ENCODE measurements at regions of chr9 and their contacts with region 1.

Region 1: GRCh38 chr9:106119176-106119575 is 424.8 kb downstream of the TMEM38B start:
- DNase-seq: no peak
- ATAC-seq: no peak
- H3K4me3 ChIP-seq: no peak overlapping the region
- H3K27ac ChIP-seq: no peak overlapping the region
- H3K4me1 ChIP-seq: no peaks in the 10 kb centered on the region
- H3K27me3 ChIP-seq: no peaks in the 10 kb centered on the region
- CTCF ChIP-seq: no peak

Region 2: GRCh38 chr9:106156465-106156864 is 37.3 kb after region 1 on chr9:
- CTCF ChIA-PET with region 1: no interaction called
- POLR2A ChIA-PET with region 1: no interaction called
- in situ Hi-C with region 1: no loop called
- intact Hi-C with region 1: no loop called
- DNase-seq: no peak
- ATAC-seq: no peak
- H3K4me3 ChIP-seq: no peak overlapping the region
- H3K27ac ChIP-seq: no peak overlapping the region
- H3K4me1 ChIP-seq: no peaks in the 10 kb centered on the region
- H3K27me3 ChIP-seq: no peaks in the 10 kb centered on the region
- CTCF ChIP-seq: no peak

Region 3: GRCh38 chr9:106350777-106351176 is 231.6 kb after region 1 on chr9:
- CTCF ChIA-PET with region 1: no interaction called
- POLR2A ChIA-PET with region 1: no interaction called
- in situ Hi-C with region 1: no loop called
- intact Hi-C with region 1: no loop called
- DNase-seq: no peak
- ATAC-seq: no peak
- H3K4me3 ChIP-seq: no peak overlapping the region
- H3K27ac ChIP-seq: no peak overlapping the region
- H3K4me1 ChIP-seq: no peaks in the 10 kb centered on the region
- H3K27me3 ChIP-seq: no peaks in the 10 kb centered on the region
- CTCF ChIP-seq: no peak

Region 4: GRCh38 chr9:107112707-107113243 is 993.6 kb after region 1 on chr9:
- CTCF ChIA-PET with region 1: interaction called, 16 read pairs
- POLR2A ChIA-PET with region 1: no interaction called
- in situ Hi-C with region 1: no loop called
- intact Hi-C with region 1: no loop called
- DNase-seq: no peak
- ATAC-seq: no peak
- H3K4me3 ChIP-seq: no peak overlapping the region
- H3K27ac ChIP-seq: no peak overlapping the region
- H3K4me1 ChIP-seq: no peaks in the 10 kb centered on the region; the same call in 1 of the 2 replicates
- H3K27me3 ChIP-seq: no peaks in the 10 kb centered on the region
- CTCF ChIP-seq: no peak

Measured in Panc1 (cell line).